RWPE1 (cell line): ENCODE measurements at regions of chr15 and their contacts with region 1.

Region 1: DNA sequence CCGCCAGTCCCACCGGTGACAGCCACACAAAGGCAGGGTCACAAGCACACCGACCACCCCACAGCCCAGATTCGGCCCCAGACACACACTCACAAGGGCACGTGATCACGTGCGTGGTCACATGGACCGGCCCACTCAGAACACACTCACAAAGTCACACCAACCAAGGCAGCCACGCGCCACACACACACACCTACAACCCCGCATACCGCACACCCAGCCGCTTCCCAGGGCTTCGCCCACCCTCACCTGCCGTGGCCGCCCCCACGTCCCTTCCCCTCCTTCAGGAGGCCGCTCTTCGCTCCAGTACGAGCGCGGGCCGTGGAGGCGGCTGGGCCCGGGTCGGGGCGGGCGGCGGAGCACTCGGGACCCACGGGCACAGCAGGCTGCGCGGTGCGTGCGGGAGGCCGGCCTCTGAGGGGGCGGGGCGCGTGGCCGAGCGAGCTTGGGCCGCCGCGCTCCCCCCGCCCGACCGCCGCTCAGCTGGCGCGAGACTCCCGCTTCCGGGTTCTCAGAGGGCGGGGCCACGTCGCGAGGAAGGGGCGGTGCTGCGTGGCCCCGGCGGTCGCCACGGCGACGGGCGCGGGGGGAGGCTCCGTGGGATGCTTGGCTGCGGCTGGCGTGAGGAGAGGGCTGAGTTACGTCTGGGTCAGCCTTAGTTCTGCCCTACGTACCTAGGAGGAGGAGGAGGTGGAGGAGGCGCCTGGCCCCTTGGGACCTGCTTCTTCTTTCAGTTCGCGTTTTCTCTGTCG is at the start of gene SPG21:
- DNase-seq: peak; percentile 97
- H3K27ac ChIP-seq: peak within 1 kb of the TSS; percentile 80
- CTCF ChIP-seq: no peak

Region 2: GRCh38 chr15:64836023-64836536 is 153.5 kb before region 1 on chr15:
- CTCF ChIA-PET with region 1: interaction called, 10 read pairs
- POLR2A ChIA-PET with region 1: interaction called, 3 read pairs
- DNase-seq: no peak
- H3K27ac ChIP-seq: peak overlapping the region; percentile 31
- CTCF ChIP-seq: peak; percentile 66

Region 3: DNA sequence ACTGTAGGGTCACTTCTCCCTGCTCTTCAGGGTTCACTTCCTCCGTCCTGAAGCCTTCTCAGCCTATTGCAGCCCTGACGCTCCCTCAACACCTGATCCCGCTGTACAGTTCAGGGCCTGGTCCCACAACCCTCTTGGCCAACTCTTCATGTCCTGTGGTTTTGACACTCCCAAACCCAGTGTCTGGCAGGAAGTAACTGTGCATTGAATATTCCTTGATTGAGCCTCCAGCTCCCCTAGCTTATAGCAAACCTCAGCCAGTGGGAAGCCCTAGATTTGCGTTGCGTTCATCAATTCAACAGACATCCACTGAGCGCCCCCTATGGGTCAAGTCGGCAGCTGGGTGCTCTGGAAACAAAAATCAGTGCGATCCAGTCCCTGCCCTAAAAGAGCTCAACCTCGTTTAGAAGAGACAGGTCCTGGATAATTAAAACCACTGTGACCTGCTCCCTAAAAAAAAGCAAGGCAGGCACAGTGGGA is 111.9 kb after region 1 on chr15:
- CTCF ChIA-PET with region 1: no interaction called
- POLR2A ChIA-PET with region 1: no interaction called
- DNase-seq: peak; percentile 20
- H3K27ac ChIP-seq: no peak overlapping the region
- CTCF ChIP-seq: peak; percentile 59